CD14-positive monocyte (primary cell): ENCODE measurements at regions of chr6 and their contacts with region 1.

Region 1: DNA sequence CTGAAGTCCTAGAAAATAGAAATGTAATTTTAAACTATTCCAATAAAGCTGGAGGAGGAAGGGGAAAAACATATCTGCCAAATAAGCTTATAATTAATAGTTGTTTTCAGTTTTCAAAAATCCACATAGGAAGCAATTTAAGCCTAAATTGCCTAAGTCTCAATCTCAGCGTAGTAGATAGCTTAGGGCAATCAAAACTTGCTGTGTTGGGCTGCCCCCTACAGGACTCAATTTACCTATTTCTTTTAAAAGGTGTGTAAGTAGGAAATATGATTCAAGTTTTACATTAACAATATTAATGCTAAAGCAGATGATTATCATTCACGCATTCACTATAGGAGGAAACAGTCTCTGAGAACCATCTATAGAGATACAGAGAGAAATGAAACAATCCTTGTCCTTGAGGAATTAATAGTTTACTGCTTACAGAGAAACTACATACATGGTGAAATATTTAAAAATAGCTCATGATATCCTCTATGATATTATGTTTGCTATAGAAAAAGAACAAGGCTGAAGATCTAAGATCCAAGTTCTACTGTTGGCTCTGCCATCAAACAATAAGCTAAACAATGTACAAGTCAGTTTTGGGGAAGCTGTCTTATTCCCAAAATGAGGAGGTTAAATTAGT is 102.1 kb downstream of the ATG5 start:
- DNase-seq: peak; percentile 58 to 85 (median 73)
- H3K4me3 ChIP-seq: no peak overlapping the region
- H3K4me3 Mint-ChIP-seq: no peak overlapping the region
- H3K27ac ChIP-seq: no peak overlapping the region
- H3K27ac Mint-ChIP-seq: no peak overlapping the region
- H3K4me1 ChIP-seq: peaks cover 5 to 6% of the 10 kb centered on the region in 2 donors
- H3K4me1 Mint-ChIP-seq: peaks cover 9% of the 10 kb centered on the region
- H3K27me3 ChIP-seq: no peaks in the 10 kb centered on the region
- H3K27me3 Mint-ChIP-seq: no peaks in the 10 kb centered on the region
- CTCF ChIP-seq: peak; percentile 84

Region 2: GRCh38 chr6:105484238-105485161 is 738.9 kb before region 1 on chr6:
- intact Hi-C with region 1: loop called (anchors 5 kb)
- DNase-seq: peak; percentile 13 to 34 (median 23)
- H3K4me3 ChIP-seq: no peak overlapping the region
- H3K4me3 Mint-ChIP-seq: no peak overlapping the region
- H3K27ac ChIP-seq: no peak overlapping the region
- H3K27ac Mint-ChIP-seq: peak overlapping the region in 2 of 7 donors; percentile 4 to 6
- H3K4me1 ChIP-seq: peaks cover 15 to 19% of the 10 kb centered on the region in 2 donors
- H3K4me1 Mint-ChIP-seq: peaks cover 36% of the 10 kb centered on the region
- H3K27me3 ChIP-seq: no peaks in the 10 kb centered on the region
- H3K27me3 Mint-ChIP-seq: peaks cover 0 to 3% (median 2%) of the 10 kb centered on the region in 3 donors
- CTCF ChIP-seq: peak; percentile 77

Region 3: GRCh38 chr6:106273087-106273486 is 49.7 kb after region 1 on chr6:
- intact Hi-C with region 1: no loop called
- DNase-seq: no peak
- H3K4me3 ChIP-seq: no peak overlapping the region
- H3K4me3 Mint-ChIP-seq: no peak overlapping the region
- H3K27ac ChIP-seq: no peak overlapping the region
- H3K27ac Mint-ChIP-seq: no peak overlapping the region
- H3K4me1 ChIP-seq: no peaks in the 10 kb centered on the region
- H3K4me1 Mint-ChIP-seq: peaks cover 5% of the 10 kb centered on the region
- H3K27me3 ChIP-seq: no peaks in the 10 kb centered on the region
- H3K27me3 Mint-ChIP-seq: no peaks in the 10 kb centered on the region
- CTCF ChIP-seq: no peak